Activated CD8-positive, alpha-beta T cell treated with anti-CD3 and anti-CD28 coated beads for 36 hours (primary cell): ENCODE measurements at regions of chr6 and their contacts with region 1.

Region 1: GRCh38 chr6:30483677-30484279 is 5.5 kb upstream of the HLA-E start:
- DNase-seq: peak; percentile 51
- ATAC-seq: no peak
- H3K4me3 Mint-ChIP-seq: no peak overlapping the region
- H3K27ac Mint-ChIP-seq: no peak overlapping the region
- H3K4me1 Mint-ChIP-seq: peaks cover 42% of the 10 kb centered on the region
- H3K27me3 Mint-ChIP-seq: peaks cover 37% of the 10 kb centered on the region
- CTCF ChIP-seq: peak; percentile 84

Region 2: GRCh38 chr6:30463651-30464618 is 19.8 kb before region 1 on chr6:
- CTCF ChIA-PET with region 1: interaction called, 88 read pairs
- POLR2A ChIA-PET with region 1: no interaction called
- intact Hi-C with region 1: no loop called
- DNase-seq: peak; percentile 78
- ATAC-seq: peak; percentile 64
- H3K4me3 Mint-ChIP-seq: no peak overlapping the region
- H3K27ac Mint-ChIP-seq: no peak overlapping the region
- H3K4me1 Mint-ChIP-seq: peaks cover 20% of the 10 kb centered on the region
- H3K27me3 Mint-ChIP-seq: peaks cover 86% of the 10 kb centered on the region
- CTCF ChIP-seq: no peak

Region 3: DNA sequence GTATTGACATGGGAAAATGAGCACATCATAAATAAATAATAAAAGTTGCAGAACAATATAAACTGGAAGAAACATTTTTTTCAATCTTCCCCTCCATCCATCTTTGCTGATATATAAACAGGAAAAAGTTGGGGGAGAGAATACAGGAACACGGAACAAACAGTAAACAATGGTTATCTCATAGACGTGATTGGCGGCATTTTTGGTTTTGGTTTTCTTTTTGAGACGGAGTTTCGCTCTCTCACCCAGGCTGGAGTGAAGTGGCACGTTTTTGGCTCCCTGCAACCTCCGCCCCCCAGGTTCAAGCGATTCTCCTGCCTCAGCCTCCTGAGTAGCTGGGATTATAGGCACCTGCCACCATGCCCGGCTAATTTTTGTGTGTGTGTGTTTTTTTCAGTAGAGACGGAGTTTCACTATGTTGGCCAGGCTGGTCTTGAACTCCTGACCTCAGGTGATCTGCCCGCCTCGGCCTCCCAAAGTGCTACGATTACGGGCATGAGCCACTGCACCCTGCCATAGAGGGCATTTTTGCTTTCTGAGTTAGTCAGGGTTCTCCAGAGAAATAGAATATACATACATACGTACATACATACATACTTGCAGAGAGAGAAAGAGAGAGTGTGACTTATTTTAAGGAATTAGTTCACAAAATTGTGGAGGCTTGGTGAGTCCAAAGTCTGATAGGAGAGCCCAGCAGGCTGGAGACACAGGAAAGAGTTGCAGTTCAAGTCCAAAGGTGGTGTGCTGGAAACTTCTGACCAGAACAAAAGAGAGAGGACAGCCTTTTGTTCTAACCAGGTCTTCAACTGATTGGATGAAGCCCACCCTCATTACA is 49.9 kb after region 1 on chr6:
- CTCF ChIA-PET with region 1: interaction called, 515 read pairs
- POLR2A ChIA-PET with region 1: interaction called, 6 read pairs
- intact Hi-C with region 1: loop called (anchors 2 kb)
- DNase-seq: no peak
- ATAC-seq: no peak
- H3K4me3 Mint-ChIP-seq: peak overlapping the region; percentile 41
- H3K27ac Mint-ChIP-seq: peak overlapping the region; percentile 89
- H3K4me1 Mint-ChIP-seq: peaks cover 43% of the 10 kb centered on the region
- H3K27me3 Mint-ChIP-seq: no peaks in the 10 kb centered on the region
- CTCF ChIP-seq: no peak

Region 4: DNA sequence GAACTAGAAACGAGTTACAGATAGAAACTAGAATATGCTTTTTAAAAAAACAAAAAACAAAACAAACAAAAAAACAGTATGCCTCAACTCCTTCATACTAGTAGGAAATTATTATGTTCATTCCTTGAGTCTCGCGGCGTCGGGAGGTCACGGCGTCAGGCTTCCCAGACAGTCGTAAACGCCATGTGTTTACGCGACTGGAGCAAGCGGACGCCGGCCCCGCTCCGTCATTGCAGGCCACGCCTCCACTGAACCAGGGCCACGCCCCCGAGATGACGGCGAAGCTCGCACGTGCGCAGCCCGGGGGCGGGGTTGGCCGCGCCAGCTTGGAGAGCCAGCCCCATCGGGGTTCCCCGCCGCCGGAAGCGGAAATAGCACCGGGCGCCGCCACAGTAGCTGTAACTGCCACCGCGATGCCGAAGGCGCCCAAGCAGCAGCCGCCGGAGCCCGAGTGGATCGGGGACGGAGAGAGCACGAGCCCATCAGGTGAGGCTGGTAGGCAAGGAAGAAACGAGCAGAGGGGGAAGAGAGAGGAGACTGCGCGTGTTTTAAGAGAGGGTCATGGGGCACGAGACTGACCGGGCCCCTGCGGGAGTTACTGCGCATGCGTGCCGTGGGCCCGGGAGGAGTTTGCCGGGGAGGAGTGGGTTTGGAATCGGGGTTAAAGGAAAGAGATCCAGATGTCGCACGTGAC is 87.4 kb after region 1 on chr6 and contains the start of gene ABCF1:
- CTCF ChIA-PET with region 1: interaction called, 14 read pairs
- POLR2A ChIA-PET with region 1: no interaction called
- intact Hi-C with region 1: no loop called
- DNase-seq: peak; percentile 99
- ATAC-seq: peak; percentile 92
- H3K4me3 Mint-ChIP-seq: peak within 1 kb of the TSS; percentile 86
- H3K27ac Mint-ChIP-seq: peak within 1 kb of the TSS; percentile 96
- H3K4me1 Mint-ChIP-seq: peaks cover 63% of the 10 kb centered on the region
- H3K27me3 Mint-ChIP-seq: no peaks in the 10 kb centered on the region
- CTCF ChIP-seq: no peak
- total RNA-seq, gene ABCF1: 86.9 to 88.0 TPM